ENCODE measurements at regions of chr3 and their contacts with region 1.

Region 1: GRCh38 chr3:124559881-124560574 is 170.2 kb upstream of the UMPS start:
- DNase-seq: peak in 1 of 2 experiments; percentile 84
- H3K4me3 ChIP-seq: no peak overlapping the region
- H3K27ac ChIP-seq: no peak overlapping the region
- H3K4me1 ChIP-seq: peaks cover 0 to 4% (median 2%) of the 10 kb centered on the region in 4 experiments; a peak in 4 of 7 replicates
- H3K27me3 ChIP-seq: no peaks in the 10 kb centered on the region
- CTCF ChIP-seq: peak; percentile 53 to 93 (median 86)
- EP300 ChIP-seq: no peak
- POLR2A ChIP-seq: no peak
- RAD21 ChIP-seq: peak; percentile 92 to 93

Region 2: GRCh38 chr3:124351430-124352148 is 208.4 kb before region 1 on chr3:
- CTCF ChIA-PET with region 1: interaction called, 30 read pairs
- POLR2A ChIA-PET with region 1: no interaction called
- DNase-seq: no peak
- H3K4me3 ChIP-seq: no peak overlapping the region
- H3K27ac ChIP-seq: no peak overlapping the region
- H3K4me1 ChIP-seq: no peaks in the 10 kb centered on the region
- H3K27me3 ChIP-seq: no peaks in the 10 kb centered on the region
- CTCF ChIP-seq: peak in 2 of 3 experiments; percentile 53 to 83; a peak in 3 of 4 replicates
- EP300 ChIP-seq: 0 out of 3 replicates have a peak, but pooled peaks of 1 of the 2 experiments have one; percentile 45
- POLR2A ChIP-seq: no peak
- RAD21 ChIP-seq: peak; percentile 92 to 93

Region 3: DNA sequence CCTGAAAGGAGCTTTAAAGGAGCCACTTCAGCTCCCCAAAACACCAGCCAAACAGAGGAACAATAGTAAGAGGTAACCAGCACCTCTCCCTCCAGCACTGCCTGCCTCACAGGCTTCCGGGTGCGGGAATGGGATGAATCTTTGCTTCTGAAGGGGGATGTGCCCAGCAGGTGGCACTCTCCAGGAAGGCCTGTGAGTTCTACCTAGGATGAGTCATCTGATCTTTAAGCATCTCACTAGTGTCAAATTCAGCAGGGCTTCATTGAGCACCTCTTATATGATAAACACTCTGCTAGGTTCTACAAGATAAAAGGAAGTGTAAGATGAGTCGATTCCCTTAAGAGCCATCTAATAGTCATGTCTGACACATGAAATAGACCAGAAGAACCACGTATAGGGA is 67.2 kb before region 1 on chr3:
- CTCF ChIA-PET with region 1: interaction called, 19 read pairs
- POLR2A ChIA-PET with region 1: no interaction called
- DNase-seq: peak in 1 of 2 experiments; percentile 49
- H3K4me3 ChIP-seq: no peak overlapping the region
- H3K27ac ChIP-seq: no peak overlapping the region
- H3K4me1 ChIP-seq: no peaks in the 10 kb centered on the region; a peak in 1 of 7 replicates
- H3K27me3 ChIP-seq: no peaks in the 10 kb centered on the region
- CTCF ChIP-seq: peak; percentile 22 to 39 (median 32); a peak in 2 of 4 replicates
- EP300 ChIP-seq: no peak
- POLR2A ChIP-seq: no peak
- RAD21 ChIP-seq: peak in 1 of 2 experiments; percentile 37; a peak in 1 of 4 replicates

Region 4: GRCh38 chr3:124520970-124521369 is 39.1 kb before region 1 on chr3:
- CTCF ChIA-PET with region 1: interaction called, 10 read pairs
- POLR2A ChIA-PET with region 1: no interaction called
- DNase-seq: no peak
- H3K4me3 ChIP-seq: no peak overlapping the region
- H3K27ac ChIP-seq: no peak overlapping the region
- H3K4me1 ChIP-seq: peaks cover 0 to 7% (median 3%) of the 10 kb centered on the region in 4 experiments; a peak in 3 of 7 replicates
- H3K27me3 ChIP-seq: no peaks in the 10 kb centered on the region
- CTCF ChIP-seq: no peak
- EP300 ChIP-seq: no peak
- POLR2A ChIP-seq: no peak
- RAD21 ChIP-seq: no peak

Region 5: DNA sequence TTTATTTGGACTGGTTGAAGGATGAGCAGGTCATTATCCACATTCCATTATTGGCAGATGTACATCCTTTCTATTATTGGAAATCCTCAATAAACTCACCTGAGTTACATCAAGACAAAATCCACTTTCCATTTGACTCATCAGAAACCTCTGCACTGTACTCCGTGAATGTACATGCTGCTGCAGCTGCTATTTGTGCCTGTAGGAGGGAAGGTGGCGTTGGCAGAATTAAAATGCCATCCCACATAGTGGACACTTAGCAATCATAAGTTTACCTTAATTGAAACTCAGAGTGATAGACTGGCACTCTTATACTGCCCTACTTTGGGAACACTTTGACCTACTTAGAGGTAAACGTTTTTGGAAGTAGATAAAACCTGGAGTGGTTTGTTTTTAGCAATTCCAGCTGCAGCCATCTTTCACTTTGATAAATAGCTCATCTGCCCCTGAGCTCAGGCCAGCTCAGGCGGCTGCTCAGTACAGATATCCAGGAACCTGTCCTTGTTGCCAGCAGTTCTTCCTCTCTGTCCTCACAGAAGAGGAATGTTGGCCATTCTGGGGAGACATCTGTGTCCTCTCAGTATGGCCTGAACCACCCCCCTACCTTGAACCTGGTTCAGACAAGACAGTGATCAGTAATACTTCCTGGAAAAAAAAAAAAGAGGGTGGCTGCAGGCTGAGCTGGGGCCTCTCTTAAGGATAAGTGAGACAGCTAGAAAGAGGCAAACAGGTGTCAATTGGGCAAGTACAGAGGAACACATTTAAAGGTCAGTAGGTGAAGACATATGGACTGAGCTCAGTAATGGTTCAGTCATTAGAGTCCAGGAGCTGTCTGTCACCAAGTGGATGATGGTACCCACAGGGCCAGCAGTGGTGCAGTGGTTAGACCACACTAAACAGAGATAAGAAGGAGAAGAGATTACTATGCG is 16.8 kb after region 1 on chr3:
- CTCF ChIA-PET with region 1: interaction called, 14 read pairs
- POLR2A ChIA-PET with region 1: no interaction called
- DNase-seq: no peak
- H3K4me3 ChIP-seq: no peak overlapping the region
- H3K27ac ChIP-seq: no peak overlapping the region
- H3K4me1 ChIP-seq: no peaks in the 10 kb centered on the region
- H3K27me3 ChIP-seq: 0 out of 7 replicates have a peak, but pooled peaks cover 0 to 2% (median 0%) of the 10 kb centered on the region in 4 experiments
- CTCF ChIP-seq: no peak
- EP300 ChIP-seq: no peak
- POLR2A ChIP-seq: no peak
- RAD21 ChIP-seq: no peak